PC-3 (cell line): ENCODE measurements at regions of chr1 and their contacts with region 1.

Region 1: DNA sequence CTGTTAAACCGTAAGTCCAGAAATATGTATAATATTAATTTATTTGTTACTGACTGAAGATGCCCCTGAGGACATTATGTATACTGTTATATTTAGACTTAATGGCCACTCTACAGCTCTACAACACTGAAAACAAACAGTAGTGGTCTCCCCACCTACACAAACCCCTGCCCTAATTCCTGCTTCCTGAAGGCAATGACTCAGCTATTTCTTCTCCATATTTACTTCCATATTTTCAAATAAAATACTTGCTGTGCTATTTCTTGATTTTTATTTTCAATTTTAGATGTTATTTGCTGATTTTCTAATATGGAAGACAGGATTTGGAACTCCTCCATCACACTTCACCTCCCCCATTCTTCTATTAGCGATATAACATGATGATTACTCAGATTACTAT is 97.6 kb downstream of the PCNX2 start:
- DNase-seq: peak; percentile 32
- ATAC-seq: no peak
- H3K4me3 ChIP-seq: no peak overlapping the region
- H3K27ac ChIP-seq: peak overlapping the region; percentile 29
- H3K4me1 ChIP-seq: peaks cover 18% of the 10 kb centered on the region
- H3K27me3 ChIP-seq: no peaks in the 10 kb centered on the region
- CTCF ChIP-seq: no peak

Region 2: DNA sequence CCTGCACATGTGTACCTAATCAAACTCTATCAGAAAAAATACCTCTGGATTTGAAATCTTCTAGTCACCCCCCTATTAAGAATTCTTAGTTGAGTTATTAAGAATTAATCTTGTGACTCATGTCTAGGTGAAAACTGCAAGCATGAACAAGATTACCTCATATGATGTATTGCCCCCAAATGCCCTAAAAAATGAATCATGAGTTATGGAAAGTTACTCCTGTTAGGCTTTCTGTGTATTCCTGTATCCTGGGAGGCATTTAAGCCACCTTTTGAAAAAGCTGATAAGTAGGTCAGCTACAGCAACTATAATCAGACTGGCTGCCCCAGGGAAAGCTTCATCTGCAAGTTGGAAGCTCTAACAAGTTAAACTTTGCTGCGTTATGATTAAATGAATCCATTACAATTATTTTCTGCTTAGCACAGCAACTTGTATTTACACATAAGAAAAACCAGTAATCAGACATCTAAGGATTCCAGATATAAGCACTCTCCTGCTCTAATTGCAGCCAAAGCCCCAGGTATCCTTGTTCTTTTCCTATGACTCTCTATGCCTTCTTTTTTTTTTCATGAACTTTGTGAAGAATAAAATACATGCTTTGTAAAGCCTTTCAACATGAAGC is 99.9 kb before region 1 on chr1:
- CTCF ChIA-PET with region 1: no interaction called
- POLR2A ChIA-PET with region 1: interaction called, 10 read pairs
- intact Hi-C with region 1: no loop called
- DNase-seq: no peak
- ATAC-seq: no peak
- H3K4me3 ChIP-seq: no peak overlapping the region
- H3K27ac ChIP-seq: no peak overlapping the region
- H3K4me1 ChIP-seq: peaks cover 7% of the 10 kb centered on the region
- H3K27me3 ChIP-seq: no peaks in the 10 kb centered on the region
- CTCF ChIP-seq: no peak

Region 3: GRCh38 chr1:233394860-233395717 is 197.1 kb after region 1 on chr1:
- CTCF ChIA-PET with region 1: no interaction called
- POLR2A ChIA-PET with region 1: interaction called, 17 read pairs
- intact Hi-C with region 1: no loop called
- DNase-seq: peak; percentile 90
- ATAC-seq: peak; percentile 97
- H3K4me3 ChIP-seq: no peak overlapping the region
- H3K27ac ChIP-seq: no peak overlapping the region
- H3K4me1 ChIP-seq: 0 out of 2 replicates have a peak, but pooled peaks cover 3% of the 10 kb centered on the region
- H3K27me3 ChIP-seq: no peaks in the 10 kb centered on the region
- CTCF ChIP-seq: peak; percentile 98